ENCODE measurements at regions of chr6 and their contacts with region 1.

Region 1: DNA sequence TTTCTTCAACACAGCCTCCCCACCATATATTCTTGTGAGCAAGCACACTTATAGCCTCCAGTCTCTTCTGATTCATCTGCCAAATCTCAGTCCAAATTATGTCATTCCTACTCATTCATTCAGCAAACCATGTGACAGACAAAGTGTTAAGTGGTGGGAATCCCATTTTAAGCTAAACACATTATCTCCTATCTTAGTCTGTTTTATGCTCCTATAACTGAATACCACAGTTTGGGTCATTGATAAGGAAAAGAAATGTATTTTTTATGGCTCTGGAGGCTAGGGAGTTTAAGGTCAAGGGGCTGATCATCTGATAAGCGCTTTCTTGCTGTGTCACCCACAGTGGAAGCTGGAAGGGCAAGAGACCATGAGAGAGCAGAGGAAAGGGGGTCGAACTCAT is 23.9 kb upstream of the SMIM13 start:
- DNase-seq: no peak

Region 2: GRCh38 chr6:10837995-10838793 is 231.6 kb before region 1 on chr6 and contains the start of gene MAK:
- intact Hi-C with region 1: loop called (anchors 10 kb)
- DNase-seq: peak; percentile 52 to 97 (median 75)

Region 3: GRCh38 chr6:10954590-10955010 is 115.2 kb before region 1 on chr6:
- intact Hi-C with region 1: loop called (anchors 1 kb)
- DNase-seq: peak in 9 of 10 donors; percentile 30 to 91 (median 68)

Region 4: DNA sequence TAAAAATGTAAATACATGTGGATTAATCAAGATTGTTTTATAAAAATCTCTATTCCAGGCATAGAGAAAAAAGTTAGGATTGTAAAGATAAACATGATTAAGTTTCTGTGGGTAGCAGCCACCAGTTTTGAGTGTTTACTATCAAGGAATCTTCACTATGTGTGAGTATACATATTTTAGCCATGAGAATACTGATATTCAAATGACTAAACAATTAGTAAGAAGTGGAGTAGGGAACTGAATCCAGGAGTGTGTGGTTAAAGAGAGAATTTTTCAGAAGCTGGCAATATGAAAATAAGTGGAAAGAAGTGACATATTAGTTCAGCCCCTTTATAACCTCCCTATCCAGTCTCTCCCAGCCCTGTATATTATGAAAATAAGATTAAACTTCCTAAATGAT is 35.9 kb before region 1 on chr6:
- intact Hi-C with region 1: no loop called
- DNase-seq: no peak

Region 5: GRCh38 chr6:11111769-11112437 is 42.1 kb after region 1 on chr6:
- intact Hi-C with region 1: no loop called
- DNase-seq: no peak

Region 6: DNA sequence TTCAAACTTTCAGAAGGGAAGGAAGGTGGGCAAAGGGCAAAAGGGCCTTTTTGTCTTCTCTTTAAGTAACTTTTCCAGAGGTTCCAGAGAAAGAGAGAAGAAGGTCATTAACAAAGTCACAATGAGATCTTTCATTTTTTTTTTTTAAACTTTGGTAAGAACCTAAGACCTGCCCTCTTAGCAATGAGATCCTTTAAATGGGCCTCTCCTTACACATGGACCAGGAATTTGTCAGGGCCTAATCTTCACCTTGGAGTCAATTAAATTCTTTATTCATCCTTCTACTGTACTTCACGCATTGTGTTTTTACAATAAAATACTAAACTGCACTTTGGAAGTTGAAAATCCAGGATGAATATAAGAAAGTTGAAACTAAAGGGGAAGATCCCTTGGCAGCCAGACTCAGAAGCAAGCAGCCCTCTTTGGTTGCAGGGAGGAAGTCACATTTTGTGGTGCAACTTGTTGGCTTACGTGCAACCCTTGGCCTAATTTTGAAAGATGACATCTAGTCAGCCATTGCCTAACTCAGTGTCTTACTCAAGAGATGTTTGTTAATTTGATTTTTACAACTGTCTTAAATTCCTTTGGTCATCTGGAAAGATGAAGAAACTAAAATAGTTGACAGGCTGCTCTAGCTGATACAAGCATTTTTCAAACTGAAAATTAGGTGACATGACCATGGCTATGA is 455.9 kb after region 1 on chr6:
- intact Hi-C with region 1: no loop called
- DNase-seq: peak in 1 of 10 donors; percentile 75